Activated CD4-positive, alpha-beta T cell treated with anti-CD3 and anti-CD28 coated beads, Interleukin-2, amount 10 ng/mL, durations not matched to agents 24 days and 14 days (primary cell): ENCODE measurements at regions of chr9 and their contacts with region 1.

Region 1: GRCh38 chr9:112486221-112487007 is at the start of gene KIAA1958:
- DNase-seq: peak; percentile 96
- H3K4me3 Mint-ChIP-seq: peak within 1 kb of the TSS; percentile 98
- H3K27ac Mint-ChIP-seq: peak within 1 kb of the TSS; percentile 98
- H3K4me1 Mint-ChIP-seq: peaks cover 28% of the 10 kb centered on the region
- H3K27me3 Mint-ChIP-seq: peaks cover 3% of the 10 kb centered on the region
- total RNA-seq, gene KIAA1958: 9.8 and 10.6 TPM in 2 replicates

Region 2: DNA sequence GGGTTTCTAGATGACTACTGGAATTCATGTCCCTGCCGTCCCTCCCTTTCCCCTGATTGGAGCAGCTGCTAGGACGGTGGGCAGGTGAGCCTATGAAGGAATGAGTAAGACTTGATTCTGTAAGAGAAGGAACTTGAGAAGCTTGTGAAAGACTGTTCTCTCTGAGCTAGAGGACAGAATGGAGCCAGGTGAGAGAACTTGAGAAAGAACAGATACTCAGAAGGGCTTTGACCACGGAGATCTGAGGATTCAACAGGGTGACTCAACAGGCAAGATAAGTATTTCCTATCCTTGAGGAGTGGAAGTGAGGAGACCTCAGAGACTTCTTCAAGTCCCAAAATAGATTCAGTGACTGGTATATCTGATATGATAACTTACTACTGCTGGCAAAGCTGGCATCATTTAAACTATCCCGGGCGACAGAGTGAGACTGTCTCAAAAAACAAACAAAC is 64.6 kb before region 1 on chr9:
- intact Hi-C with region 1: no loop called
- DNase-seq: no peak
- H3K4me3 Mint-ChIP-seq: no peak overlapping the region
- H3K27ac Mint-ChIP-seq: peak overlapping the region; percentile 44
- H3K4me1 Mint-ChIP-seq: peaks cover 6% of the 10 kb centered on the region
- H3K27me3 Mint-ChIP-seq: no peaks in the 10 kb centered on the region

Region 3: GRCh38 chr9:112465352-112465751 is 21.1 kb before region 1 on chr9:
- intact Hi-C with region 1: no loop called
- DNase-seq: no peak
- H3K4me3 Mint-ChIP-seq: no peak overlapping the region
- H3K27ac Mint-ChIP-seq: no peak overlapping the region
- H3K4me1 Mint-ChIP-seq: no peaks in the 10 kb centered on the region
- H3K27me3 Mint-ChIP-seq: no peaks in the 10 kb centered on the region

Region 4: GRCh38 chr9:112569186-112569585 is 82.8 kb after region 1 on chr9:
- intact Hi-C with region 1: no loop called
- DNase-seq: no peak
- H3K4me3 Mint-ChIP-seq: no peak overlapping the region
- H3K27ac Mint-ChIP-seq: no peak overlapping the region
- H3K4me1 Mint-ChIP-seq: no peaks in the 10 kb centered on the region
- H3K27me3 Mint-ChIP-seq: no peaks in the 10 kb centered on the region

Region 5: GRCh38 chr9:113150670-113151611 is 664.5 kb after region 1 on chr9 and contains the start of gene SLC31A2:
- intact Hi-C with region 1: loop called (anchors 10 kb)
- DNase-seq: peak; percentile 97
- H3K4me3 Mint-ChIP-seq: peak within 1 kb of the TSS; percentile 84
- H3K27ac Mint-ChIP-seq: peak within 1 kb of the TSS; percentile 80
- H3K4me1 Mint-ChIP-seq: peaks cover 28% of the 10 kb centered on the region
- H3K27me3 Mint-ChIP-seq: peaks cover 2% of the 10 kb centered on the region
- total RNA-seq, gene SLC31A2: 4.5 and 5.3 TPM in 2 replicates